ENCODE measurements at regions of chr7 and their contacts with region 1.

Region 1: DNA sequence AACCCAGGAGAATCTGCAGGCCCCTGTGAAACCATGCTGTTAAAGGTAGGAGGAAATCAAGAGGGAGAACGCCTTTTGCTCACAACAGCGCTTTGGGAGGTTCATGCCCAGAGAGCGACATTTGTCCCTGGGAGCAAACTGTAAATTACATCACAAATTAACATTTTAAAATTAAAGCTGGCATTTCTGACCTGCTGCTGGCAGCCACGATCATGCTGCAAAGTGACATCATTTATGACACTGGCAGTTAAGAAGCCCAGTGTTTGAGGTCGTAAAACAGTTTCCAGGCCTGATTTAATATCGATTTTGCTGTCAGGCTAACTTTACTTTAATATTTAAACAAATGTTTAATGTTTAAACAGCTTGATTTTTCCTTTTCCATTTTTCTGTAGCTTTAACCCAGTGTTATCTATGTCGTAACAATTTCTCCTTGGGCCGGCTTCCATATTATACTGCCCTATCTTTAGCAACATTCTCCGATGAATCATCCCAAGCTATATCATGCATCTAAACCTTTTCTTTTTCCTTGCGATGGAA is 86.5 kb upstream of the NPVF start:
- DNase-seq: peak; percentile 30
- H3K4me3 Mint-ChIP-seq: peak overlapping the region; percentile 2
- H3K27ac Mint-ChIP-seq: peak overlapping the region; percentile 30
- H3K4me1 Mint-ChIP-seq: peaks cover 36% of the 10 kb centered on the region
- H3K27me3 Mint-ChIP-seq: no peaks in the 10 kb centered on the region
- CTCF ChIP-seq: no peak

Region 2: DNA sequence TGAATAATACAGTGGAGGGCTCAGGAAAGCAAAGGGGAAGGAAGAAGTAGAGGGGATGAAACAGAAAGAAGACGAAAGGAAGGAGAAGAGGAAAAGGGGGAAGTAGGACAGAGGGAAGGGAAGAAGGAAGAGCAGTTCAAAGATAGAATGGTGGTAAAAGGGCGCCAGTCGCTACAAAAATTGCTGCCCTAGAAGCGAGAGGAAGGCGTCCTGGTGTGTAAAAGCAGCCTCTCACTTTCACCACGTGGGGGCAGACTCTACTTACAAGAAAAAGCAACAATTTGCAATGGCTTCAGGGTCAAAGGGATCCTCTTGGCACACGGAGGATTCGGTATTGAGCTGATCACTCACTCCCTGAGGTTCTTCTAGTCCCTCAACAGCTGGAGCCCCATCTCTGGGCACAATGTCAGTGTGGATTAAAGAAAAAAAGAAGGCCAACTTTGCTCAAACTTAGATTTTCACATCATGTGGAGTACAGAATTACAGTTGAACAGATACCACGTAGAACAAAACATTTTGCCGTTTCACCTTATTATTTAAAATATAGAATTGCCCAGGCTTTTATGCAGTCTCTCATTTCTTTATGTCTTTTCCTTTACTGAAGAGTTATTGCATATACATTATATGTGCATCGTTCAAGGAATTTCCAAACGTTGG is 55.1 kb before region 1 on chr7:
- CTCF ChIA-PET with region 1: interaction called, 9 read pairs
- intact Hi-C with region 1: loop called (anchors 2 kb)
- DNase-seq: peak; percentile 80
- H3K4me3 Mint-ChIP-seq: no peak overlapping the region
- H3K27ac Mint-ChIP-seq: no peak overlapping the region
- H3K4me1 Mint-ChIP-seq: peaks cover 37% of the 10 kb centered on the region
- H3K27me3 Mint-ChIP-seq: peaks cover 60% of the 10 kb centered on the region
- CTCF ChIP-seq: peak; percentile 93